Left cardiac atrium (tissue), 4 donors: ENCODE measurements at regions of chr11 and their contacts with region 1.

Region 1: GRCh38 chr11:47259178-47259977 is 1.6 kb downstream of the NR1H3 start:
- DNase-seq: no peak
- ATAC-seq: peak in 1 of 2 donors; percentile 30

Region 2: GRCh38 chr11:47176328-47177228 is 82.8 kb before region 1 on chr11 and contains the start of gene ARFGAP2:
- intact Hi-C with region 1: loop called in 1 of 2 experiments (anchors 5 kb)
- DNase-seq: peak; percentile 97
- ATAC-seq: peak; percentile 95 to 96
- total RNA-seq, gene ARFGAP2: 41.4 to 54.4 TPM

Region 3: GRCh38 chr11:47186076-47186936 is 73.1 kb before region 1 on chr11 and contains the start of gene PACSIN3:
- intact Hi-C with region 1: loop called in 1 of 2 experiments (anchors 5 kb)
- DNase-seq: peak; percentile 62
- ATAC-seq: peak; percentile 69 to 71
- total RNA-seq, gene PACSIN3: 108 to 126 TPM